MCF 10A (cell line): ENCODE measurements at regions of chr6 and their contacts with region 1.

Region 1: DNA sequence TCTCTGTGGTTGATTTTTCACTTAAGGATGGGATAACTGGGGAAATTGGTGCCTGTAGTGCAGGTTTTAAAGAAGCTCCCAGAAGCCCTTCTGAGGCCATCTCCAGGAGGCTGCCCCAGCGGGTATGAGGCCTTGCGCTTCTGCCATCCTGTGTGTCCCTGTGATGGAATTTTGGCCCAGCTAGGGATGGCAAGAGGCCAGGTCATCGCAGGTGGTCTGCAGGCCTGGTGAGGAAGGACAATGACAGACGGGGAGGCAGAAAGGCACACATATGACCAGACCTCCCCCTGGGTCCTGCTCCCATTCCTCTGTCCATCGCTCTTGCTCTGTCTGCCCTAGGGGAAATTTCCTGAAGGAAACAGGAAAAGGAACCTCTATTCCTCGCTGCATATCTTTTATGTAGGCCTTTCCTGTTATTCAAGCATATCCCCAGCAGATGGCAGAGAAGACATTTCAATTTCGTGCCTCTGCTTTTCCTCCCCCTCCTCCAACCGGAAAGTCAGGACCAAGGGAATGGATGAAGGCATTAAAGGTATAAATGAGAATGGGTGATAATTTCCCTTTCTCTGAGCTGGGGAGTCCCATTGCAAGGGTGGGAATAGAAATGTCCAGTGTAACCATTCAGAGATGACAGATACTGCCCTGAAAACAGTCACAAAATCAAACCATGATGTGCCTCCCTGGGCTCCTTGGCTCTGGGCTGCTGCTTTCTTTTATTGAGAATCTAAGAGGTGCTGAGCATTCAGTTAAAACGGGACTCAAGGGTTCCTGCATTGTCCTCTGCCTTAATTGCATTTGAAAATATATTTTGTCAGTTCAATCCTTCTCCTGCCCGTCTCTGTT is 17.6 kb upstream of the HLA-F start:
- DNase-seq: peak; percentile 72
- H3K4me3 Mint-ChIP-seq: no peak overlapping the region
- H3K27ac Mint-ChIP-seq: no peak overlapping the region
- H3K4me1 Mint-ChIP-seq: peaks cover 6% of the 10 kb centered on the region
- H3K27me3 Mint-ChIP-seq: peaks cover 15% of the 10 kb centered on the region
- CTCF ChIP-seq: peak; percentile 56

Region 2: DNA sequence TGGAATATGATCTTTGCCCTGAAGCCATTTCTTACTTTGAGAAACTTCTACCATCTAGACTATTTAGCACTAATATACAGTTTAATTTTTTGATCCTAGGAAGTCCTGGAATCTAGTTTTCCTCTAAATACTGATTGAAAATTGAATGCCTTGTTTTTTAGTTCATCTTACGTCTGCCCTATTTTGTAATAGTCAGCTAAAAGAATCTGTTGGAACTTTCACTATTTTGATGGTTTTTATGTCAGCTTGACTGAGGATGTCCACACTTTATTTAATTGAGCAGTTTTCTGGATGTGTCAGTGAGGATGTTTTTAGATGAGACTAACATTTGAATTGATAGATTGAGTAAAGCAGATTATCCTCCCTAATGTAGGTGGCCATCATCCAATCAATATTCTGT is 301.8 kb before region 1 on chr6:
- CTCF ChIA-PET with region 1: no interaction called
- POLR2A ChIA-PET with region 1: no interaction called
- intact Hi-C with region 1: no loop called
- DNase-seq: no peak
- H3K4me3 Mint-ChIP-seq: no peak overlapping the region
- H3K27ac Mint-ChIP-seq: no peak overlapping the region
- H3K4me1 Mint-ChIP-seq: no peaks in the 10 kb centered on the region
- H3K27me3 Mint-ChIP-seq: peaks cover 92% of the 10 kb centered on the region
- CTCF ChIP-seq: no peak

Region 3: DNA sequence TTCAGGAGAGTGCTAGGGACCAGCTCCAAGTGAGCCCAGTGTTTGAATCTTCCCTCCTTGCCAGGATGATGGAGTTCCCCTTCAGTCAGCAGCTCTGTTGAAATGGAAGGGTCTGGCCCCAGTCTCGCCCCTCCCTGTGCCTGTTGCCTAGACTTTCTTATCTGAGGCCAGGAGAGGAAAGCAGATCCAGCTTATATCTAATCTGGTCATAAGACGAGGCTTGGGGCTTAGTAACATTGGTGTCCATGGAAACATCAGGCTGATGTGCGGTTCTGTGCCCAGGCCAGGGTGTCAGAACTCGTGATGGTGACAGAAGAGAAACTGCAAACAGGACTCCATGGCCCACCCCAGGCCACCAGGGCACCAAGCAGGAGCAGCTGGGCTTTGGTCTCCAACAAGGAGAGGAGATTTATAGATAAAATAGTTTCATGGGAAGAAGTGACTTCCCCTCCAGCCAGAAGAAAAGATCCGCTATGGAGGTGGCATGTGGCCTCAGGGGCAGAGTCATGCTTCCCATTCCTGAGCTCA is 227.6 kb before region 1 on chr6:
- CTCF ChIA-PET with region 1: no interaction called
- POLR2A ChIA-PET with region 1: no interaction called
- intact Hi-C with region 1: no loop called
- DNase-seq: no peak
- H3K4me3 Mint-ChIP-seq: no peak overlapping the region
- H3K27ac Mint-ChIP-seq: no peak overlapping the region
- H3K4me1 Mint-ChIP-seq: no peaks in the 10 kb centered on the region
- H3K27me3 Mint-ChIP-seq: peaks cover 6% of the 10 kb centered on the region
- CTCF ChIP-seq: no peak

Region 4: GRCh38 chr6:29567991-29568390 is 137.6 kb before region 1 on chr6:
- CTCF ChIA-PET with region 1: no interaction called
- POLR2A ChIA-PET with region 1: no interaction called
- intact Hi-C with region 1: no loop called
- DNase-seq: no peak
- H3K4me3 Mint-ChIP-seq: no peak overlapping the region
- H3K27ac Mint-ChIP-seq: no peak overlapping the region
- H3K4me1 Mint-ChIP-seq: no peaks in the 10 kb centered on the region
- H3K27me3 Mint-ChIP-seq: peaks cover 73% of the 10 kb centered on the region
- CTCF ChIP-seq: no peak

Region 5: GRCh38 chr6:29724937-29725869 is 19.6 kb after region 1 on chr6:
- CTCF ChIA-PET with region 1: interaction called, 15 read pairs
- POLR2A ChIA-PET with region 1: no interaction called
- intact Hi-C with region 1: no loop called
- DNase-seq: no peak
- H3K4me3 Mint-ChIP-seq: peak overlapping the region; percentile 79
- H3K27ac Mint-ChIP-seq: no peak overlapping the region
- H3K4me1 Mint-ChIP-seq: peaks cover 5% of the 10 kb centered on the region
- H3K27me3 Mint-ChIP-seq: no peaks in the 10 kb centered on the region
- CTCF ChIP-seq: no peak

Region 6: GRCh38 chr6:29834564-29835436 is 129.2 kb after region 1 on chr6:
- CTCF ChIA-PET with region 1: interaction called, 27 read pairs
- POLR2A ChIA-PET with region 1: interaction called, 4 read pairs
- intact Hi-C with region 1: loop called (anchors 1 kb)
- DNase-seq: peak; percentile 42
- H3K4me3 Mint-ChIP-seq: no peak overlapping the region
- H3K27ac Mint-ChIP-seq: no peak overlapping the region
- H3K4me1 Mint-ChIP-seq: peaks cover 6% of the 10 kb centered on the region
- H3K27me3 Mint-ChIP-seq: peaks cover 45% of the 10 kb centered on the region
- CTCF ChIP-seq: peak; percentile 91

Region 7: DNA sequence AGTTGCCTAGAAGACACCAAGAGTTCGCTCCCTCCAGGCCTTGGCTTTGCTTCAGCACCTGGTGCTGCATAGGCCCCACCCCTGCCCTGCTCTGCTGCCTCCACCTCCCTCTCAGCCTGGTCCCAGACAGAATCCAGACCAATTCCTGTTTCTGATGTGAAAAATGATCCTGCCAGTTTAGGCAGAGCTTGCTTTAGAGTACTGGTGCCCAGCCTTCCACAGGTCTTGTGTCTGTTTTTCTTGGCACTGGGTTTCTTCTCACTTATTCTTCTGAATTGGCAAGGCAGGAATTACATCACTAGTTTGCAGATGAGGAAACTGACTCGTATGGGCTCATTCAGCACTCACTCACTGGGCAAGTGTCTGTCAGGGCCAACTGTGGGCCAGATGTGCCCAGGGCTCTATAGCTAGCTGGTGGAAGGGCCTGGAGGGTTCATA is 289.7 kb after region 1 on chr6:
- CTCF ChIA-PET with region 1: interaction called, 3 read pairs
- POLR2A ChIA-PET with region 1: no interaction called
- intact Hi-C with region 1: loop called (anchors 10 kb)
- DNase-seq: peak; percentile 91
- H3K4me3 Mint-ChIP-seq: no peak overlapping the region
- H3K27ac Mint-ChIP-seq: no peak overlapping the region
- H3K4me1 Mint-ChIP-seq: peaks cover 45% of the 10 kb centered on the region
- H3K27me3 Mint-ChIP-seq: peaks cover 10% of the 10 kb centered on the region
- CTCF ChIP-seq: no peak